Stomach (tissue), 19 donors: ENCODE measurements at regions of chr1 and their contacts with region 1.

Region 1: GRCh38 chr1:43529206-43529731 is 1.4 kb upstream of the PTPRF start:
- DNase-seq: peak; percentile 90 to 94
- H3K4me3 ChIP-seq: no peak overlapping the region
- H3K27ac ChIP-seq: peak overlapping the region in 1 of 5 donors; percentile 92
- H3K4me1 ChIP-seq: peaks cover 23 to 45% (median 40%) of the 10 kb centered on the region in 4 donors
- H3K27me3 ChIP-seq: peaks cover 0 to 19% (median 0%) of the 10 kb centered on the region in 3 donors
- CTCF ChIP-seq: peak in 6 of 7 experiments; percentile 80 to 98 (median 92)
- EP300 ChIP-seq: no peak
- POLR2A ChIP-seq: no peak

Region 2: GRCh38 chr1:43214501-43215444 is 314.5 kb before region 1 on chr1:
- intact Hi-C with region 1: no loop called
- DNase-seq: no peak
- H3K4me3 ChIP-seq: no peak overlapping the region
- H3K27ac ChIP-seq: no peak overlapping the region
- H3K4me1 ChIP-seq: no peaks in the 10 kb centered on the region
- H3K27me3 ChIP-seq: no peaks in the 10 kb centered on the region
- CTCF ChIP-seq: no peak
- EP300 ChIP-seq: no peak
- POLR2A ChIP-seq: no peak

Region 3: GRCh38 chr1:43227143-43227764 is 302.0 kb before region 1 on chr1:
- intact Hi-C with region 1: no loop called
- DNase-seq: peak; percentile 90 to 93
- H3K4me3 ChIP-seq: no peak overlapping the region
- H3K27ac ChIP-seq: peak overlapping the region in 1 of 5 donors; percentile 42
- H3K4me1 ChIP-seq: peaks cover 7 to 41% (median 24%) of the 10 kb centered on the region in 4 donors
- H3K27me3 ChIP-seq: no peaks in the 10 kb centered on the region
- CTCF ChIP-seq: peak in 6 of 7 experiments; percentile 57 to 97 (median 90)
- EP300 ChIP-seq: no peak
- POLR2A ChIP-seq: no peak

Region 4: DNA sequence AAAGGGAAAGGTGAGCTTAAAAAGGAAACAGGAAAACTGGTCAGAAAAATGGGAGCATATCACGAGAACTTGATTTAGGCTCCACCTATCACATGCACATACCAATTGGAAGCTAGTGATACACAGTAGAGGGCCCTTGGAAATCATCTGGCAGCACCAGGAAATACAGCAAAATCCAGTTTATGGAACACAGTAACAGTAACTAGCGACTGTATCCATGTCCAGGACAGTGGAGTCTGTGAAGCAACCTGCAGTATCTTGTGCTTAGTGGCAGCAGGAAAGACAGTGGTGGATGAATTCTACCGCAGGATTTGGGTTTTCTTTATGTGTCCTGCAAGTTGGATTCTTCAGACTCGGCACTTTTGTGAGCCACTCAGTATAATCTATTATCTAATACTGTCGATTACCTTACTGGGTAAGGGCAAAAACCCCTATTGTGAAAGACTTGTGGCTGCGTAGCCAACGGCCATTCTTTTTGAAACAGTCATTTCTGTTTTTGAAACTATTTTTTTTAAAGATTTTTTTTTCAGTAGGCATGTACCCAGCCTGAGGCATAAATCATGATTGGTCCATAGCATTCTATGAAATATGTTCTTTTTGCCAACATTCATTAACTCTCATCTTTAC is 119.1 kb after region 1 on chr1:
- intact Hi-C with region 1: loop called (anchors 5 kb)
- DNase-seq: peak in 1 of 2 donors; percentile 36
- H3K4me3 ChIP-seq: no peak overlapping the region
- H3K27ac ChIP-seq: no peak overlapping the region
- H3K4me1 ChIP-seq: peaks cover 16 to 38% (median 26%) of the 10 kb centered on the region in 4 donors
- H3K27me3 ChIP-seq: no peaks in the 10 kb centered on the region
- CTCF ChIP-seq: no peak
- EP300 ChIP-seq: no peak
- POLR2A ChIP-seq: no peak